Activated CD4-positive, alpha-beta T cell treated with anti-CD3 and anti-CD28 coated beads for 36 hours (primary cell): ENCODE measurements at regions of chr12 and their contacts with region 1.

Region 1: GRCh38 chr12:54993161-54993835 is 8.7 kb upstream of the TESPA1 start:
- DNase-seq: peak; percentile 70
- ATAC-seq: peak; percentile 53
- H3K4me3 Mint-ChIP-seq: no peak overlapping the region
- H3K27ac Mint-ChIP-seq: no peak overlapping the region
- H3K4me1 Mint-ChIP-seq: peaks cover 43% of the 10 kb centered on the region
- H3K27me3 Mint-ChIP-seq: no peaks in the 10 kb centered on the region

Region 2: GRCh38 chr12:54526812-54527630 is 466.3 kb before region 1 on chr12:
- CTCF ChIA-PET with region 1: no interaction called
- POLR2A ChIA-PET with region 1: no interaction called
- intact Hi-C with region 1: loop called (anchors 1 to 10 kb)
- DNase-seq: peak; percentile 73
- ATAC-seq: no peak
- H3K4me3 Mint-ChIP-seq: no peak overlapping the region
- H3K27ac Mint-ChIP-seq: peak overlapping the region; percentile 14
- H3K4me1 Mint-ChIP-seq: peaks cover 28% of the 10 kb centered on the region
- H3K27me3 Mint-ChIP-seq: no peaks in the 10 kb centered on the region

Region 3: GRCh38 chr12:54749191-54749818 is 244.0 kb before region 1 on chr12:
- CTCF ChIA-PET with region 1: interaction called, 62 read pairs
- POLR2A ChIA-PET with region 1: no interaction called
- intact Hi-C with region 1: loop called (anchors 2 to 5 kb)
- DNase-seq: peak; percentile 46
- ATAC-seq: peak; percentile 71
- H3K4me3 Mint-ChIP-seq: no peak overlapping the region
- H3K27ac Mint-ChIP-seq: no peak overlapping the region
- H3K4me1 Mint-ChIP-seq: peaks cover 18% of the 10 kb centered on the region
- H3K27me3 Mint-ChIP-seq: peaks cover 2% of the 10 kb centered on the region

Region 4: GRCh38 chr12:54958048-54958658 is 35.1 kb before region 1 on chr12:
- CTCF ChIA-PET with region 1: interaction called, 21 read pairs
- POLR2A ChIA-PET with region 1: no interaction called
- intact Hi-C with region 1: loop called (anchors 1 to 2 kb)
- DNase-seq: peak; percentile 65
- ATAC-seq: peak; percentile 20
- H3K4me3 Mint-ChIP-seq: no peak overlapping the region
- H3K27ac Mint-ChIP-seq: peak overlapping the region; percentile 80
- H3K4me1 Mint-ChIP-seq: peaks cover 88% of the 10 kb centered on the region
- H3K27me3 Mint-ChIP-seq: no peaks in the 10 kb centered on the region

Region 5: GRCh38 chr12:55019779-55020178 is 26.5 kb after region 1 on chr12 and contains the start of gene NEUROD4:
- CTCF ChIA-PET with region 1: interaction called, 10 read pairs
- POLR2A ChIA-PET with region 1: no interaction called
- intact Hi-C with region 1: no loop called
- DNase-seq: peak; percentile 46
- ATAC-seq: no peak
- H3K4me3 Mint-ChIP-seq: no peak within 1 kb of the TSS
- H3K27ac Mint-ChIP-seq: no peak within 1 kb of the TSS
- H3K4me1 Mint-ChIP-seq: peaks cover 5% of the 10 kb centered on the region
- H3K27me3 Mint-ChIP-seq: peaks cover 27% of the 10 kb centered on the region
- total RNA-seq, gene NEUROD4: not detected

Region 6: DNA sequence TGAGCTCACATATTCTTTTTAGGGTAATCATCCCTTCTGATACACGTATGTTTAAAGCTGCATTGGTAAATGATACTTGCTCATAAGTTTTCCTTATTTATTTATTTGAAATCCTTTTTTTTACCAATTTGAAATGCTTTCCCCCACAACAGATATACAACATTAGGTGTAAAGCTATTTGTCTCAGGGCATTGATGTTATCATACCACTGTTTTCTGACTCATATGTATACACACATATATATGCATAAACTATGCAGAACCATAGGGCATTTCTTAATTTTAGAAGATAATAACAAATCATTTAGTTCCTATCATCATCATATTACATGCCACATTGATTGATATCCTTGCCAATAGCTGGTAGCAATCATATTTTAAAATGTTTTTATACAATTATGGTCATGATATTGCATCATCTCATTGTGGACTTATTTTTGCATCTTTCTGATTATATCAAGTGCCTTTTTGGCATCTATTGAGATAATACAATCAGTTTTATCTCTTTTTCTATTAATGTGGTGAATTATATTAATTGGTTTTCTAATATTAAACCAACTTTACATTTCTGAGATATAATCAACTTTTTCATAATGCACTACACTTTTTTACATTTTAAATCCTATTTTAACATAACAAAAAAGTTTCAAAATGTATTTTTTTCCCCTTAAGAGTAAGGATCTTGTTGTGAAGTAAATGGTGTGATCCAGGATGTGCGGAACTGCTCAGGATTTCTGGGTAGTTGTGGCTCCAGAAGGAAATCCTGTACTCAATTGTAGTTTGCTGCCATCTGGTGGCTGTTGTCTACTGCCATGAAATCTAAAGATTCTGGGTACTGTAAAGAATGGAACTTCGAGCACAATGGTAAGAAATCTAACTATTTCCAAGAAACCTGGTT is 149.6 kb after region 1 on chr12:
- CTCF ChIA-PET with region 1: interaction called, 4 read pairs
- POLR2A ChIA-PET with region 1: no interaction called
- intact Hi-C with region 1: loop called (anchors 2 to 5 kb)
- DNase-seq: peak; percentile 66
- ATAC-seq: no peak
- H3K4me3 Mint-ChIP-seq: no peak overlapping the region
- H3K27ac Mint-ChIP-seq: no peak overlapping the region
- H3K4me1 Mint-ChIP-seq: peaks cover 4% of the 10 kb centered on the region
- H3K27me3 Mint-ChIP-seq: peaks cover 9% of the 10 kb centered on the region